Heart right ventricle (tissue), 16 donors: ENCODE measurements at regions of chr12 and their contacts with region 1.

Region 1: GRCh38 chr12:131850856-131851559 is 22.8 kb downstream of the MMP17 start:
- DNase-seq: peak in 1 of 2 donors; percentile 9
- ATAC-seq: peak in 6 of 8 donors; percentile 12 to 91 (median 76)
- H3K4me3 ChIP-seq: no peak overlapping the region
- H3K27ac ChIP-seq: no peak overlapping the region
- H3K4me1 ChIP-seq: peaks cover 0 to 10% (median 0%) of the 10 kb centered on the region in 9 donors
- H3K27me3 ChIP-seq: peaks cover 0 to 27% (median 21%) of the 10 kb centered on the region in 7 donors
- CTCF ChIP-seq: peak in 4 of 9 donors; percentile 61 to 85 (median 71)

Region 2: DNA sequence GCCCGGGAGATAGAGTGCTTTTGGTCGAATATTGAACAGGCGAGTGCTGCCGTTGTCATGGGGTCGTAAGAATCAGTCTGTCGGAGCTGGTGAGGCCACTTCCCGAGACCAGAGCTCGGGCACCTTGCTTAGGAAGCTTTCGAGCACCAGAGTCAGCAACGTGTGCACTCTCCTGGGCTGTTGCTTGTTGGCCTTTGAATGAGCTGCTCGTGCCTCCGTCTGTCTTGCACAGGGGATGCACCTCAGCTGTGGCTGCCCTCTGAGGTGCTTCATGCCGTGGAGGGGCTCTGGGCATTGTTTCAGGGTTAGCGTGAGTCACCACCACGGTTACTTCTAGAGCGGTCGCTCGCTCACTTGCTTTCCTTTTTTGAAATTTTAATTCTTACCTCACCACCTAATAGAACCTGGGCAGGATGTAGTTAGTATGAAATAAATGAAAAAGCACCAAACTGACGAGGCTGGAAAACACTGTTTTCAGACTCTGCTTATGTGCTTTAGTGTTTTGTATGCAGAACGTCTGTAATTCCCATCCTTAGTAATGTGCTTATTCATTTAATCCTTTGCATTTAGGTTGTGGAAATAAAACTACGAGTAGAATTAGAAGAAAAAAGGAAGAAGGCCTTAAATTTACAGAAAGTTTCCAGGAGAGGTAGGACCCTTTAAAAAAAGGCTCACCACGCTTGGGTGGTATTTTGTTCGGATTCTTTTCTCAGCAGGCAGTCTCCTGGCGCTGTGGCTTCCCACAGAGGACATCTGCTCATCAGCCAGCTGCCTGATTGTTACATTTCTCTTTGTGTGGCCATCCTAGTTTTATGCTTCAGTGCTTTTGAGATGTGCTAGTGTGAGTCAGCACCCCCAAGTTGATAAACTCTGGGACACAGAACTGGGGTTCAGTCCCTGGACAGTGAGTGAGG is 139.3 kb after region 1 on chr12:
- intact Hi-C with region 1: loop called in 1 of 10 experiments (anchors 10 kb)
- DNase-seq: no peak
- ATAC-seq: no peak
- H3K4me3 ChIP-seq: no peak overlapping the region
- H3K27ac ChIP-seq: no peak overlapping the region
- H3K4me1 ChIP-seq: peaks cover 0 to 12% (median 0%) of the 10 kb centered on the region in 9 donors
- H3K27me3 ChIP-seq: no peaks in the 10 kb centered on the region
- CTCF ChIP-seq: no peak